HCT116 (cell line): ENCODE measurements at regions of chr7 and their contacts with region 1.

Region 1: GRCh38 chr7:28921822-28922221 is 36.3 kb downstream of the TRIL start:
- DNase-seq: peak; percentile 67
- ATAC-seq: peak; percentile 96
- H3K4me3 ChIP-seq: no peak overlapping the region
- H3K27ac ChIP-seq: no peak overlapping the region
- H3K4me1 ChIP-seq: peaks cover 5 to 10% of the 10 kb centered on the region in 2 experiments; a peak in 3 of 4 replicates
- H3K27me3 ChIP-seq: no peaks in the 10 kb centered on the region
- CTCF ChIP-seq: peak; percentile 79 to 83 (median 82)
- POLR2A ChIP-seq: no peak
- RAD21 ChIP-seq: peak; percentile 75

Region 2: DNA sequence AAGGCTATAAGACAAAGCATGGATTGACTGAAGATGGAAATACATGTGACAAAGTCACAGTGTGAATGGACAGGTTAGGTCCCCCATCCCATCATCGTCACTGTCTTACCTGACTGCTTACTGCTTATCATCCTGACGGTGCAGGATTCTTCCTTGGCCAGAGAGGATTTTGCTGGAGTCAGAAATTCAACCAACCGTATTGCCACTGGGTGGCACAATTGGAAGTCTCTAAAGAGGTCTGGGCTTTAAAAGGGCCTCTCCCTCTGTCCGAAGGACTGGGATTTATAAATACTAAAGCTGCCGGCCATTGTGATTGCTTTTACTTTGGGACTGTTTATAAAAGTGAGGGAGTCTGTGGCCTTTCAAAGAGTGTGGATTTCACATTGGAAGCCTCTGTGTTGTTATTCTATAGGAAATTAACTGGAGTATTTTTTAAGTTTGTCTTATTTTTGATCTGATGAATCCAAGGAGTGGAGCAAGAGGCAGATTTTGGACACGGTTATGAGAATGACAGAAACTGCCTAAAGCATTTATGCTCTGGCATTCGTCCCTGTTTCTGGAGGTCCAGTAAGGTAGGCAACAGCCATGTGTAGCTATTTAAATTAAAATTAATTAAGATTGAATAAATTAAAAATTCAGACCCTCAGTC is 622.8 kb before region 1 on chr7:
- CTCF ChIA-PET with region 1: interaction called, 12 read pairs
- POLR2A ChIA-PET with region 1: no interaction called
- RAD21 ChIA-PET with region 1: no interaction called
- intact Hi-C with region 1: no loop called
- DNase-seq: peak; percentile 48
- ATAC-seq: peak; percentile 89
- H3K4me3 ChIP-seq: no peak overlapping the region
- H3K27ac ChIP-seq: no peak overlapping the region
- H3K4me1 ChIP-seq: peaks cover 0 to 3% of the 10 kb centered on the region in 2 experiments; a peak in 2 of 4 replicates
- H3K27me3 ChIP-seq: no peaks in the 10 kb centered on the region
- CTCF ChIP-seq: peak; percentile 56 to 64 (median 59)
- POLR2A ChIP-seq: no peak
- RAD21 ChIP-seq: peak; percentile 74

Region 3: DNA sequence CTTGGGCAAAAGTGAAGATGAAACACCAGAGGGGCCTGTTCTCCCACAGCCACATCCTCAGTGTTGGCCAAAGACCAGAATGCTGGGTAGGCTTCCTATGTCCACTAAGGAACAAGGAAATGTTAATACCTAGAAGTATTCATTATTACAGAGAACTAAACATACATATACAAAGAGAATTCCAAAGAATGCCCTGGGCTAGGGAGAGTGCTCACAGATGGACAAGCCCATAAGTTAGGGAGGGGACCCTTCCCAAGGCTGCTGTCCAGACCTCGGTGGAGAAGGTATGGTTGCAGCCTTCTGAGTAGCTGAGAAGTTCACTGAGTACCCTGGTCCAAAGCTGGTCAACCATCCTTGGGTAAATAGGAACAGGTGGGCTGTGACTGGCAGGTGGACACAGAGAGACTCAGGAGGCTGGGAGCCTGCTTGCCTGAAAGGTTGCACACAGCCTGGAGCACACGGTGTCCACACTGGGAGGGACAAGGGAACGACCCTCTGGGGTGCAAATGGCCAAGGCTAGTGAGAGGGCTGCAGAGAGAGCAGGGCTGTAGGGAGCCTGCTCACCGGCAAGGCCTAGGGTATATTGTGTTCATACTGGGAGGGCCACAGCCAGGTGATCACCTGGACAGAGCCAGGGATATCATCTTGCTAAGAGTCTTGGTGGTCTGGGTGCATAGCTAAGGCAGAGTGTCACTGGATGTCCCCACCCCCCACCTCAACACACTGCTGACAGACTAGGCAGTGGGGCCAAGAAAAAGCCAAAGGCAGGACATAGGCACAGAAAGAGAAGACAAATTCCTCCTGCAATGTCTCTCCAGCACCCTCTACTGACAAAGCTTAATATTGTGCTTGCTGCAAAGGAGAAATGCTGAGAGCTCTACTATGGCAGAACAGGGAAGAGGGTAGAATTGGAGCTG is 184.2 kb after region 1 on chr7:
- CTCF ChIA-PET with region 1: interaction called, 356 read pairs
- POLR2A ChIA-PET with region 1: interaction called, 8 read pairs
- RAD21 ChIA-PET with region 1: interaction called, 14 to 17 read pairs
- intact Hi-C with region 1: loop called (anchors 1 kb)
- DNase-seq: peak; percentile 39
- ATAC-seq: peak; percentile 90
- H3K4me3 ChIP-seq: no peak overlapping the region
- H3K27ac ChIP-seq: no peak overlapping the region
- H3K4me1 ChIP-seq: no peaks in the 10 kb centered on the region
- H3K27me3 ChIP-seq: no peaks in the 10 kb centered on the region
- CTCF ChIP-seq: peak; percentile 75 to 85 (median 79); a peak in 5 of 6 replicates
- POLR2A ChIP-seq: no peak
- RAD21 ChIP-seq: peak; percentile 83

Region 4: DNA sequence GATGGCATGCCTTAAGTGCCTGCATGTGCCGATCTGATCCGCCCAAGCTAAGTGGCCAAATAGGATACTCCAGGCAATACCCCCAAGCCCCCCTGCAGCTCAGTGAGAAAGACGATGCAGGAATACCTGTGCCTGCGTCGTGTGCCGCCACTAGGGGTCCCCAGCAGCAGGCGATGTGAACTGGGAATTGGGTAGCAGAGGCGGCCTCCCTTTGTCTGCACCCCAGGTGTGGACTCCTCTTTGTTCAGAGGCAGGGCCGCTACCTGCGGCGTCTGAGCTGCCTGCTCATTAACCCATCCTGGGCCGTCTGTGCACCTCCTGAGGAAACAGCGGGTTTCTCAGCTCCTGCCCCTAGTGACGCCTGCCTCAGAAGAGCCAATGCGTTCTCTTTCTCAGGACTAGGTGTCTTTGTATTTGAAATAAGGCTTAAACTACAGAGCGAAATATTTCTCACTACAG is 267.9 kb after region 1 on chr7:
- CTCF ChIA-PET with region 1: interaction called, 8 read pairs
- POLR2A ChIA-PET with region 1: no interaction called
- RAD21 ChIA-PET with region 1: no interaction called
- intact Hi-C with region 1: loop called (anchors 2 kb)
- DNase-seq: peak; percentile 45
- ATAC-seq: peak; percentile 95
- H3K4me3 ChIP-seq: no peak overlapping the region
- H3K27ac ChIP-seq: no peak overlapping the region
- H3K4me1 ChIP-seq: peaks cover 0 to 9% of the 10 kb centered on the region in 2 experiments; a peak in 2 of 4 replicates
- H3K27me3 ChIP-seq: no peaks in the 10 kb centered on the region
- CTCF ChIP-seq: peak; percentile 57 to 90 (median 78); a peak in 5 of 6 replicates
- POLR2A ChIP-seq: no peak
- RAD21 ChIP-seq: peak; percentile 72

Region 5: GRCh38 chr7:29408841-29409243 is 487.0 kb after region 1 on chr7:
- CTCF ChIA-PET with region 1: interaction called, 76 read pairs
- POLR2A ChIA-PET with region 1: interaction called, 3 read pairs
- RAD21 ChIA-PET with region 1: interaction called, 4 to 12 read pairs
- intact Hi-C with region 1: loop called (anchors 1 kb)
- DNase-seq: peak; percentile 34
- ATAC-seq: peak; percentile 80
- H3K4me3 ChIP-seq: no peak overlapping the region
- H3K27ac ChIP-seq: no peak overlapping the region
- H3K4me1 ChIP-seq: no peaks in the 10 kb centered on the region
- H3K27me3 ChIP-seq: no peaks in the 10 kb centered on the region; the same call in 1 of the 2 replicates
- CTCF ChIP-seq: peak; percentile 67 to 87 (median 79)
- POLR2A ChIP-seq: no peak
- RAD21 ChIP-seq: peak; percentile 94